CD4-positive, alpha-beta T cell (primary cell): ENCODE measurements at regions of chr3 and their contacts with region 1.

Region 1: GRCh38 chr3:101936419-101937356 is 87.4 kb downstream of the NFKBIZ start:
- DNase-seq: peak in 5 of 14 experiments; percentile 24 to 86 (median 77)
- ATAC-seq: peak; percentile 92
- H3K4me3 ChIP-seq: peak overlapping the region; percentile 16
- H3K4me3 Mint-ChIP-seq: peak overlapping the region; percentile 79
- H3K27ac ChIP-seq: peak overlapping the region in 1 of 2 donors; percentile 37
- H3K27ac Mint-ChIP-seq: peak overlapping the region; percentile 87
- H3K4me1 ChIP-seq: peaks cover 19% of the 10 kb centered on the region
- H3K4me1 Mint-ChIP-seq: peaks cover 25% of the 10 kb centered on the region
- H3K27me3 ChIP-seq: no peaks in the 10 kb centered on the region
- H3K27me3 Mint-ChIP-seq: no peaks in the 10 kb centered on the region
- CTCF ChIP-seq: no peak

Region 2: GRCh38 chr3:101819758-101820157 is 116.9 kb before region 1 on chr3:
- CTCF ChIA-PET with region 1: no interaction called
- POLR2A ChIA-PET with region 1: no interaction called
- intact Hi-C with region 1: loop called in 1 of 2 experiments (anchors 5 kb)
- DNase-seq: peak in 2 of 14 experiments; percentile 43 to 53
- ATAC-seq: no peak
- H3K4me3 ChIP-seq: no peak overlapping the region
- H3K4me3 Mint-ChIP-seq: no peak overlapping the region
- H3K27ac ChIP-seq: no peak overlapping the region
- H3K27ac Mint-ChIP-seq: no peak overlapping the region
- H3K4me1 ChIP-seq: peaks cover under 1% of the 10 kb centered on the region
- H3K4me1 Mint-ChIP-seq: peaks cover 30% of the 10 kb centered on the region
- H3K27me3 ChIP-seq: no peaks in the 10 kb centered on the region
- H3K27me3 Mint-ChIP-seq: no peaks in the 10 kb centered on the region
- CTCF ChIP-seq: no peak

Region 3: DNA sequence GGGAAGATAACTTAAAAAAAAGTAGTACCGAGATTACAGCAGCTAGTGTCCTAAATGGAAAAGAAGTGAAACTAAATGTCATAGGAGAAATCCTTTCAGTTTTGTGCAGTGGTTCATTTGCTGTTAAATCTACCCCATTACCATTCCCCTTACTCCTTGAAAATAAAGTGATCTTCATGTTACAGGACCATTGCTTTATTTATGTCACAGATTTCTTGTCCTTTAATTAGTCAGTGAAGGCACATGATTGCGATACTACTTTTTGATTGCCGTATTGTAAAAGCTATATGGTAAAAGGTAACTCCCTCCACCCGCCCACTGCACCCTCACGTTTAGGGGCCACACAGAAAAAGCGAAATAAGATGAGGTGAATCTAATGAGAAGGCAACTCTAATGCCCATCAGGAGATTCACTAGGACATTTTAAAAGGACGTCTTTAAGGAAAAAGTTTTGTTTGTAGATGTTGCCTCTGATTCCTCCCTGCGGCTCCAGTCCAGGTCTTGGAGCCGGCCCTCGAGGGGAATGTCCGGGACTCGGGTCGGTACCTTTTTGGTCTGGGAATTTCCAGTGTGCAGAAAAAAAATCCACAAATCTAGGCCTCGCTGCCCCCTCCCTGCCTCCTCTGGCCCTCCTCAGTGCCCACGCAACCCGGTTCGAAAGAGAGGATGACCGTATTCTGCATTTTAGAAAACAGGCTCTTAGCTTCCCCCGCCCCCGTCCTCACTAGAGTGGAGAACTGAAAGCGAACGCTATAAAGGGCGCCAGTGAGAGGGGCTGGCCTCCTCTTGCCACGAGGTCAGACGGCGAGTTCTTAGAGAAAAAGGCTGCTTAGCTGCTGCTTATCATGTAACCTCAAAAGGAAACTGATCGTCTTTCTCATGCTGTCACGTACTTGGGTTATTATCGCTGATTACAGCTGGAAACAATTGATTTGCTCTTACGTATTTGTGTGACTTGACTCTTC is 109.2 kb before region 1 on chr3:
- CTCF ChIA-PET with region 1: no interaction called
- POLR2A ChIA-PET with region 1: interaction called, 3 read pairs
- intact Hi-C with region 1: loop called (anchors 5 kb)
- DNase-seq: peak; percentile 55 to 93 (median 66)
- ATAC-seq: peak; percentile 79
- H3K4me3 ChIP-seq: peak overlapping the region; percentile 70
- H3K4me3 Mint-ChIP-seq: peak overlapping the region; percentile 98
- H3K27ac ChIP-seq: peak overlapping the region; percentile 90 to 93
- H3K27ac Mint-ChIP-seq: peak overlapping the region; percentile 99
- H3K4me1 ChIP-seq: peaks cover 31% of the 10 kb centered on the region
- H3K4me1 Mint-ChIP-seq: peaks cover 66% of the 10 kb centered on the region
- H3K27me3 ChIP-seq: no peaks in the 10 kb centered on the region
- H3K27me3 Mint-ChIP-seq: no peaks in the 10 kb centered on the region
- CTCF ChIP-seq: no peak

Region 4: DNA sequence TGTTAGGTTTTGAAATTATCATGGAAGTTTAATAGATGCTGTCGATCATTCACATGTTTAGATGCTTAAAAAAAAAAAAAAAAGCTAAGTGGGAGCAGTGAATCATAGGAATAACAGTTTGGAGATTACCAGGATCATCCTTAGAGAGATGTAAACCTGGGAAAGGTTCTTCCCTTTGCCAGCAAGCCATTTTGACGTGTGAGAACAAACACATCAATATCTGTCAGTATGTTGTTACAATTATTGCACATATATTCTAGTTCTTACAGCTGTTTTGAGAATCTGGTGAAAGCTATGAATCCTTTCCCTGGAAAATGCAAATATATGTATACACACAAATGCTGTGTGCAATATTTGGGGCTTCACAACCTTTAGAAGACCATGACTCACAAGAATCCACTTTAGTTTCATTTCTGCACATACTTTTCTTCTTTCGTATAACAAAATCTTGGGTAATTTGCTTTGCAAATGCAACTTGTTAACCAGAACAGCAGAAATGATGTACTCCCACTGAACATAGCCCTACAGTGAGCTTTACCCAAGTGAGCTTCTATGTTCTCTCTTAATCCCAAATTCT is 75.4 kb before region 1 on chr3:
- CTCF ChIA-PET with region 1: no interaction called
- POLR2A ChIA-PET with region 1: no interaction called
- intact Hi-C with region 1: loop called in 1 of 2 experiments (anchors 5 kb)
- DNase-seq: no peak
- ATAC-seq: peak; percentile 9
- H3K4me3 ChIP-seq: no peak overlapping the region
- H3K4me3 Mint-ChIP-seq: no peak overlapping the region
- H3K27ac ChIP-seq: no peak overlapping the region
- H3K27ac Mint-ChIP-seq: peak overlapping the region; percentile 4
- H3K4me1 ChIP-seq: peaks cover 7% of the 10 kb centered on the region
- H3K4me1 Mint-ChIP-seq: peaks cover 31% of the 10 kb centered on the region
- H3K27me3 ChIP-seq: no peaks in the 10 kb centered on the region
- H3K27me3 Mint-ChIP-seq: no peaks in the 10 kb centered on the region
- CTCF ChIP-seq: no peak

Region 5: DNA sequence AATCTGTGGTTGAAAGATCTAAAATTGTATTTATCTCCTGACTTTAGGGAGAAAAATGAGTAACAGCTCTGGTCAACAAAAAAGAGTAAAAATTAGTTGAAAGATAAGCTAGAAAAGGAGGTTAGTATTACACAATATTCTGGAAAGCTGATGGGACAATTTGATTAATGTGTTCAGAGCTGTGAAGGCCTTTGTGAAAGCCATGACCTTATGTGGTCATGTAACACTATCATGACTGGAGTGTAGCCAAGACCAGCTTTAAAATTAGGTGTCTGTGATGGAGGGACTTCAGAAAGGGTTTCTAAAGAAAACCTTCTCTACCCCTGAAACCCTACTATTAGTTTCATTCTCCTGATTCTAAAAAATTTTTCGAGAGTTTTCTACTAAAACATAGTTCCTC is 39.8 kb after region 1 on chr3:
- CTCF ChIA-PET with region 1: no interaction called
- POLR2A ChIA-PET with region 1: no interaction called
- intact Hi-C with region 1: loop called in 1 of 2 experiments (anchors 1 kb)
- DNase-seq: no peak
- ATAC-seq: no peak
- H3K4me3 ChIP-seq: no peak overlapping the region
- H3K4me3 Mint-ChIP-seq: no peak overlapping the region
- H3K27ac ChIP-seq: no peak overlapping the region
- H3K27ac Mint-ChIP-seq: no peak overlapping the region
- H3K4me1 ChIP-seq: no peaks in the 10 kb centered on the region
- H3K4me1 Mint-ChIP-seq: peaks cover 12% of the 10 kb centered on the region
- H3K27me3 ChIP-seq: no peaks in the 10 kb centered on the region
- H3K27me3 Mint-ChIP-seq: no peaks in the 10 kb centered on the region
- CTCF ChIP-seq: no peak

Region 6: DNA sequence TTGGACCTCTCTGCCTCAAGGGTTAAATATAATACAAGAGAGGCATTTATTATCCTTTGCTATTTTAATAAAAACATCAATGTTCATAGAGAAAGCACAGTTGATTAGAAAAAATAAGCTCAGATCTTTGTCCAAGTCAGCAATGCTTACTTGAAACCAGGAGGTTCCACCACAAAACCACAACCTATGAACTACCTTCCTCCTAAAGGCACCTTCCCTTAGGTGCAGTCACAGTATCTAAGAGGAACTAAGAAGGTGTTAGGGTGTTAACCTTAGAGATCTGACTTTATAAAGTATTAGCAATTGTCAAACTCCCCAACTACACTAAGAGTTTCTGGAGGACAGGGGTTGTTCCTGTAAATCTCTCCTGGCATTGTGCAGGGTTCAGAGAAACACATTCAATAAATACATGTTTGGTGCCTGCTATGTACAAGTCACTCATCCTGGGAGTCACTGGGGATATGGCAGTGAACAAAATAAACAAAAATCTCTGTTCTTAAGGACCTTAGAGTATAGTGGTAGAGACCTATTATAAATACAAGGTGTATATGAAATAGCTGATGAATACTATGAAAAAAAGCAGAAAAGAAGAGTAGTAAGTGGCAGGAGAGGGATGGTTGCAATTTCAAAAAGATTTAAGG is 121.2 kb after region 1 on chr3:
- CTCF ChIA-PET with region 1: no interaction called
- POLR2A ChIA-PET with region 1: no interaction called
- intact Hi-C with region 1: loop called in 1 of 2 experiments (anchors 5 kb)
- DNase-seq: peak in 6 of 14 experiments; percentile 9 to 88 (median 51)
- ATAC-seq: peak; percentile 98
- H3K4me3 ChIP-seq: no peak overlapping the region
- H3K4me3 Mint-ChIP-seq: peak overlapping the region; percentile 12
- H3K27ac ChIP-seq: peak overlapping the region in 1 of 2 donors; percentile 12
- H3K27ac Mint-ChIP-seq: peak overlapping the region; percentile 69
- H3K4me1 ChIP-seq: peaks cover 32% of the 10 kb centered on the region
- H3K4me1 Mint-ChIP-seq: peaks cover 40% of the 10 kb centered on the region
- H3K27me3 ChIP-seq: no peaks in the 10 kb centered on the region
- H3K27me3 Mint-ChIP-seq: no peaks in the 10 kb centered on the region
- CTCF ChIP-seq: no peak

Region 7: DNA sequence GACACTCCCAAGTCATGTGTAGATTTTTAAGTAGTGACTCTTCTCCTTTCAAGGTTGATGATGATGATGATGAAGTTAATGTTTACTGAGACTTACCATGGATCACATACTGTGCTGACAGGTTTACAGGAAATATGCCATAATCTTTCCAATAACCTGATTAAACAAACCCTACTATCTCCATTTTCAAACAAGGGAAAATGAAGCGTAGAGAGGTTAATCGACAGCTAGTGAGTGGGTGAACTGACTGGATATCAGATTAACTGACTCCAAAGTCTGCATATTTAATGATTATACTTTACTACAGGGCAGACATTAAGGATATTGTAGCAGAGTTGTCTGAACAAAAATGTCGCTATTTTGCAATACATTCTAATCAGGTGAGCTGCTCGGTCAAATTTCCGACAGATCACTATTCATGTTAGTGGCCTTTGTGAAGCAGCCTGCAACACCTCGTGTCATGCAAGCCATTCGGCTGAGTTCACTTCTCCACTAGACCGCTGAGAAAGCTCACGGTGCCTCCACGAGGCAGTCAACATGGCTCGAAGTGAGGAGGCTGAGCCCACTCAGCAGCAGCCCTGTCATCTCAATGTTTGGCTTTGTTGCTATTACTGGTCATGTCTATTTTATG is 176.8 kb after region 1 on chr3:
- CTCF ChIA-PET with region 1: no interaction called
- POLR2A ChIA-PET with region 1: interaction called, 4 read pairs
- intact Hi-C with region 1: loop called in 1 of 2 experiments (anchors 2 kb)
- DNase-seq: peak in 2 of 14 experiments; percentile 5 to 17
- ATAC-seq: no peak
- H3K4me3 ChIP-seq: no peak overlapping the region
- H3K4me3 Mint-ChIP-seq: peak overlapping the region; percentile 6
- H3K27ac ChIP-seq: peak overlapping the region in 1 of 2 donors; percentile 61
- H3K27ac Mint-ChIP-seq: peak overlapping the region; percentile 88
- H3K4me1 ChIP-seq: peaks cover 11% of the 10 kb centered on the region
- H3K4me1 Mint-ChIP-seq: peaks cover 49% of the 10 kb centered on the region
- H3K27me3 ChIP-seq: no peaks in the 10 kb centered on the region
- H3K27me3 Mint-ChIP-seq: no peaks in the 10 kb centered on the region
- CTCF ChIP-seq: no peak